ENCODE measurements at regions of chr3 and their contacts with region 1.

Region 1: DNA sequence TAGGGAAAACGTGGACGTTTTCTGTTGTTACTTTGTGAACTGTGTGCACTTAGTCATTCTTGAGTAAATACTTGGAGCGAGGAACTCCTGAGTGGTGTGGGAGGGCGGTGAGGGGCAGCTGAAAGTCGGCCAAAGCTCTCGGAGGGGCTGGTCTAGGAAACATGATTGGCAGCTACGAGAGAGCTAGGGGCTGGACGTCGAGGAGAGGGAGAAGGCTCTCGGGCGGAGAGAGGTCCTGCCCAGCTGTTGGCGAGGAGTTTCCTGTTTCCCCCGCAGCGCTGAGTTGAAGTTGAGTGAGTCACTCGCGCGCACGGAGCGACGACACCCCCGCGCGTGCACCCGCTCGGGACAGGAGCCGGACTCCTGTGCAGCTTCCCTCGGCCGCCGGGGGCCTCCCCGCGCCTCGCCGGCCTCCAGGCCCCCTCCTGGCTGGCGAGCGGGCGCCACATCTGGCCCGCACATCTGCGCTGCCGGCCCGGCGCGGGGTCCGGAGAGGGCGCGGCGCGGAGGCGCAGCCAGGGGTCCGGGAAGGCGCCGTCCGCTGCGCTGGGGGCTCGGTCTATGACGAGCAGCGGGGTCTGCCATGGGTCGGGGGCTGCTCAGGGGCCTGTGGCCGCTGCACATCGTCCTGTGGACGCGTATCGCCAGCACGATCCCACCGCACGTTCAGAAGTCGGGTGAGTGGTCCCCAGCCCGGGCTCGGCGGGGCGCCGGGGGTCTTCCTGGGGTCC is at the start of gene TGFBR2:
- DNase-seq: peak; percentile 98
- ATAC-seq: peak; percentile 90
- H3K4me3 ChIP-seq: peak within 1 kb of the TSS; percentile 94
- H3K27ac ChIP-seq: peak within 1 kb of the TSS; percentile 88
- H3K4me1 ChIP-seq: peaks cover 49% of the 10 kb centered on the region
- H3K27me3 ChIP-seq: no peaks in the 10 kb centered on the region
- CTCF ChIP-seq: no peak; the same call in 1 of the 2 replicates
- total RNA-seq, gene TGFBR2: 48.2 and 55.9 TPM in 2 replicates

Region 2: DNA sequence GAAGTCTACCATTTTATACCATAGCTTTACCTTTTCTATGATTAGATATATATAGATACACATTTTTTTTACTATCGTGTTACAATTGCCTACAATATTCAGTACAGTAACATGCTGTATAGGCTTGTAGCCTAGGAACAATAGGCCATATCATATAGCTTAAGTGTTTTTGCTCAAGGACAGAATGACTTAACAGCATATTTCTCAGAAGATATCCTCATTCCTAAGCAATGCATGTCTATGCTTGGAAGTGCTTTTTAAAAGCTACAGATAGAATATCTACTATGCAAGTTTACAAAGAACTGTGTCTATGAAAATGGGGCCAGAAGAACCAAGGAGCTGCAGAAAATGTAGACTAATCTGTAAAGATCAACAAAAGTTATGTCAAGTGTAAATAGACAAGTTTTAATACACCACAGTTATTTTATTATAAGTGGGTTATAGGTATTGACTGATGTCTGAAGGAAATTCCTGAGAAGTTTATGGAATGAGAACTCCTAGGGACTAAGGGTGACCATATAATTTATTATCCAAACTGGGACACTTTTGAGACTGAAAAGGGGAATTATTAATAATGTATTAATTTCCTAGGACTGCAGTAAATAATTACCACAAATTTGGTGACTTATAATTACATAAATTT is 138.7 kb before region 1 on chr3:
- CTCF ChIA-PET with region 1: interaction called, 4 read pairs
- POLR2A ChIA-PET with region 1: no interaction called
- intact Hi-C with region 1: loop called (anchors 5 kb)
- DNase-seq: peak; percentile 64
- ATAC-seq: peak; percentile 90
- H3K4me3 ChIP-seq: no peak overlapping the region
- H3K27ac ChIP-seq: peak overlapping the region; percentile 10; the same call in 1 of the 2 replicates
- H3K4me1 ChIP-seq: peaks cover 27% of the 10 kb centered on the region
- H3K27me3 ChIP-seq: no peaks in the 10 kb centered on the region
- CTCF ChIP-seq: no peak

Region 3: DNA sequence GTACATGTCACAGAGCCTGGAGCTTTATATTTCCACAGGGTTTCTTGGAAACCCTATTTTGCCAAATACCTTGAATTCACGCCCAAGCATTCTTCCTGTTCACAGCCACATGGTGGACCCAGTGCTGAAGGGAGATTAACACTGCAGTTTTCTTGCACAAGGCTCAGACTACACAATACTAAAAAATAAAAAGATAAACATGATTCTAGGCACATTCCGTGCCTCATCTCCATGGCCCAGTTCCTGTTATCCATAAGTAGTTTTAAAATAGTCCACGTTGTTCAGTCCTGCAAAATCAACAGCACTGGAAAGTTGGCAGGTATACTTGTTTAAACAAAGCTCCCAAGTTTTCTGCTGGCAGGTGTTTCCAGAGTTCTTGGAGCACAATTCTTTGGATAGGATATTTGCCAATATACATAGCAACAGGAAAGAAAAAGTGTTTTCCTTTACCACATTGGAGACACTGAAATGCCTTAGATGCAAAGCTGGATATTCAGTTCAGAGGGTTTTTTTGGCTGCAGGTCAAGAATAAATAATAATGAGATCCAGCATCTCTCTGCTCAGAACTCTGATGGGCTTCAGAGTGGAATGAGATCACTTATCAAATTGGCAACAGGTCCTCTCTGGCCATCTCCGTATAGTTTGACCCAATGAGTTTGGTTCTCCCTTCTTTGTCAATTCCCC is 88.1 kb before region 1 on chr3:
- CTCF ChIA-PET with region 1: no interaction called
- POLR2A ChIA-PET with region 1: interaction called, 6 read pairs
- intact Hi-C with region 1: loop called (anchors 2 kb)
- DNase-seq: peak; percentile 74
- ATAC-seq: peak; percentile 68
- H3K4me3 ChIP-seq: no peak overlapping the region
- H3K27ac ChIP-seq: peak overlapping the region; percentile 16; the same call in 1 of the 2 replicates
- H3K4me1 ChIP-seq: peaks cover 28% of the 10 kb centered on the region
- H3K27me3 ChIP-seq: no peaks in the 10 kb centered on the region
- CTCF ChIP-seq: no peak

Region 4: GRCh38 chr3:30578479-30578878 is 28.0 kb before region 1 on chr3:
- CTCF ChIA-PET with region 1: no interaction called
- POLR2A ChIA-PET with region 1: no interaction called
- intact Hi-C with region 1: loop called (anchors 2 kb)
- DNase-seq: peak; percentile 94
- ATAC-seq: peak; percentile 91
- H3K4me3 ChIP-seq: no peak overlapping the region
- H3K27ac ChIP-seq: peak overlapping the region; percentile 83
- H3K4me1 ChIP-seq: peaks cover 22% of the 10 kb centered on the region
- H3K27me3 ChIP-seq: no peaks in the 10 kb centered on the region
- CTCF ChIP-seq: no peak

Region 5: DNA sequence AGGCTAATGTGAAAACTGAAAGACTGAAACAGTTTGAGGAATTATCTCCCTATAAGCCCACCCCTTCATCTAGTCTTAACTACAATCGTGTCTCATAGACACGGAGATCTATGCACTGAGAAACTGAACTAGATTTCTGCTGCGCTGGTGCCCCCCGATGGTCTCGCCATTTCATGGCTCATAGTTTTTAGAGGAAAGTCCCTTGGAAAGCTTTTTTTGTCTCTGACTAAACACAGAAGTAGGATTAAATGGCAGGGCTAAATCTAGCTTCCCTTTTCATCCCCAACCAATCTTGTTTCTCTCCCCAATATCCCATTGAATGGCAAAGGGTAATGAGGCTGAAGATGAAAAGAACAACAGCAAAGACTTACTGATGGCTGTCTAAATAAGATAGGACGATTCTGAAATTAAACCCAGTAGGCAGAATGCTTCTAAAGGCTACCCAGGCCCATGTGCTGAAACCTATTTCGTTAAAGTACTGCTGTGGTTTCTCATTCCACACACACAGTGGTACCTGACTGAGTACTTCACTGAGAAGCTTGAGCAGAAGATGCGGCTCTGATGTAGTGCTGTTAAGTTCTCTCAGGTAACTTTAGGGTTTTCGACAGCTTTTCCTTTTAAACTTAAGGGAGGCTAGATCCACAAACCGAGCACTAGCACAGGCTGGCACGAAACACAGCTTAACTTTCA is 145.3 kb after region 1 on chr3:
- CTCF ChIA-PET with region 1: no interaction called
- POLR2A ChIA-PET with region 1: no interaction called
- intact Hi-C with region 1: loop called (anchors 5 kb)
- DNase-seq: peak; percentile 62
- ATAC-seq: peak; percentile 12; the same call in 1 of the 2 replicates
- H3K4me3 ChIP-seq: no peak overlapping the region
- H3K27ac ChIP-seq: no peak overlapping the region
- H3K4me1 ChIP-seq: peaks cover 44% of the 10 kb centered on the region
- H3K27me3 ChIP-seq: no peaks in the 10 kb centered on the region
- CTCF ChIP-seq: peak; percentile 68